AG04450 (cell line): ENCODE measurements at regions of chr22 and their contacts with region 1.

Region 1: GRCh38 chr22:30289134-30289979 is at the start of gene CASTOR1:
- DNase-seq: peak; percentile 95
- H3K4me3 ChIP-seq: peak within 1 kb of the TSS; percentile 84
- H3K27ac ChIP-seq: peak within 1 kb of the TSS; percentile 73
- H3K27me3 ChIP-seq: no peaks in the 10 kb centered on the region
- CTCF ChIP-seq: no peak
- polyA plus RNA-seq, gene CASTOR1: 12.0 and 15.3 TPM in 2 replicates

Region 2: DNA sequence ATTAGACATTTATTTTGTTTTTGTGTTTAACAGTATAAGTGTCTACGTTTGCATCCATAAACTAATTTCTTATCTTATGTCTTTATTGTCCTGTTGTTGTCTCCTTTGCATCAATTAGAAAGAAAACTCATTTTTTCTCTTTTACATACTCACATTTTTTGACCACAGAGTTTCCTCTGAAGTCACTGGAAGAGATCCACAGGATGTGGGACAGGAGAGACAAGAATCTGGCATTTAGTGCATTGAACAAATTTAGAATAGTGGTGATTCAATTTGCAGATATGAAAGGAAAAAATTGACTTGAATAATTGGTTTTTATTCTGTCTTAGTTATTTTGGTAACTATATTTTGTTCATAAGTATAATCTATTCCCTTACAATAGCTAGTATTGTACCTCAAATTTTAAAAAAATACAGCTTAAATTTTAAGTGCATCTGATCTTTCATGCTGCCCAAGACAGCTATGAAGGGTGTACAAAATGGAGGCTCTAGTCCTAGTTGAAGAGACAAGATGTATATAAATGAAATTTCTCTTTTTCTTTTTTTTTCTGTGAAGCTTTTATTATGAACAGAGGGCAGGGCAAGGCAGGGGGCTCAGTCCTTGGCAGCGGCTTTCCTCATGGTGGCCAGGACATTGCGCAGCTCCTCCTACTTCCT is 184.7 kb before region 1 on chr22:
- CTCF ChIA-PET with region 1: interaction called, 34 read pairs
- POLR2A ChIA-PET with region 1: no interaction called
- DNase-seq: no peak
- H3K4me3 ChIP-seq: no peak overlapping the region
- H3K27ac ChIP-seq: no peak overlapping the region
- H3K27me3 ChIP-seq: no peaks in the 10 kb centered on the region
- CTCF ChIP-seq: no peak

Region 3: GRCh38 chr22:30212363-30212995 is 76.9 kb before region 1 on chr22:
- CTCF ChIA-PET with region 1: no interaction called
- POLR2A ChIA-PET with region 1: no interaction called
- DNase-seq: peak; percentile 70
- H3K4me3 ChIP-seq: no peak overlapping the region
- H3K27ac ChIP-seq: peak overlapping the region; percentile 84
- H3K27me3 ChIP-seq: no peaks in the 10 kb centered on the region
- CTCF ChIP-seq: peak; percentile 14; the same call in 1 of the 2 replicates

Region 4: GRCh38 chr22:30235687-30236170 is 53.6 kb before region 1 on chr22:
- CTCF ChIA-PET with region 1: no interaction called
- POLR2A ChIA-PET with region 1: no interaction called
- DNase-seq: peak; percentile 61
- H3K4me3 ChIP-seq: no peak overlapping the region
- H3K27ac ChIP-seq: peak overlapping the region; percentile 90
- H3K27me3 ChIP-seq: no peaks in the 10 kb centered on the region
- CTCF ChIP-seq: no peak

Region 5: DNA sequence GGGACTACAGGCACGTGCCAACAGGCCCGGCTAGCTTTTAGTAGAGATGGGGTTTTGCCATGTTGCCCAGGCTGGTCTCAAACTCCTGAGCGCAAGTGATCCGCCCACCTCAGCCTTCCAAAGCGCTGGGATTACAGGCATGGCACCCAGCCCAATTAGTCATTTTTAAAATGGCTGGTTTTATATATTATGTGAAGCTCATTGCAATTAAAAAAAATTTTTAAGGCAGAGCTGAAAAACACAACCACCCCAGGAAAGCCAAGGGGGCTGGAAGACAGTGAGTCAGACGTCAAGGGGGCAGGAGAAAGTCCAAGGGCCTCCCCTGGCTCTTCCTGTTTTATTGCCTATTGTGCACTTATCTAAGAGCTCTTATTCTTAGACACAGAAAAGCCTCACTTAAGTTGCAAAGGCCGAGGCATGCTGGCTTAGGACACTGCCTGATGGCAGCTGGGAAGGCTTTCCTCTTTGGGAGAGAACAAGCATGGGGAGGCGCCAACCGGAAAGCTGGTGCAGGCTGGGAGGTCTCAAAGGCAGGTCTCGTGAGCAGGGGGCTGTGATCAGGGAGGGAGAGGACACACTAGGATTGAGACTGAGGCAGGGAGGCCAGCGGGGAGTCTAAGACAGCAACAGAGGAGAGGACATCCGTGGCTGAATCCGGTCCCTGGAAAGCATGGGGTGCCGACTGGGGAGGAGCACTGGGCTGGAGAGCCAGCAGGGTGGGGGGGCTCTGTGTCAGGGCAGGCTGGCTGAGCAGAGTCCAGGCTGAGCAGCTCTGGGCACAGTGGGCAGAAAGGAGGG is 11.6 kb before region 1 on chr22:
- CTCF ChIA-PET with region 1: interaction called, 13 read pairs
- POLR2A ChIA-PET with region 1: interaction called, 5 read pairs
- DNase-seq: no peak
- H3K4me3 ChIP-seq: no peak overlapping the region
- H3K27ac ChIP-seq: peak overlapping the region; percentile 65
- H3K27me3 ChIP-seq: no peaks in the 10 kb centered on the region
- CTCF ChIP-seq: no peak

Region 6: DNA sequence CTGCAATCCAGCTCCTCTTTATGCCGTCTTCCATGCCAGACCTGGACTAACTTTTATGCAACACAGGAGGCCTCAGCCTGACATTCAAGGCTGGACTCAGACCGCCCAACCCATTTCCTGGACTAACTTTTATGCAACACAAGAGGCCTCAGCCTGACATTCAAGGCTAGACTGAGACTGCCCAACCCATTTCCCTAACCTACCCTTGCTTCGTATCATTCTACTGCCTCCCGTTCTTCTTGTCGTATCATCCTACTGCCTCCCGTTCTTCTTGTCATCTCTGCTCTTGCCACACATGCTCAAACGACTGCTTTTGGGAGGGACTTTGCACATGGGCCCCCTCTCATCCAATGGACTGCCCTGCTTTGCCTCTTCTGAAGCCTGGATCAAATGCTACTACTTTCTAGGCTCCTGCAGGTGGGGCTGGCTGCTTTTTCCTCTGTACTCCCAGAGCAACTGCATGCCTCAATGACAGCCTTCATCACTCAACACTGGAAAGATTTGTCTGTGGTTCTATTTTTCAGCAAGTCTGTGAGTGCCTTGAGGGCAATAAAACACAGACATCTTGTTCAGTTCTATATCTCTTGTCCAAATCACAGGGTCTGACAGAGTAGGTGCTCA is 29.6 kb after region 1 on chr22:
- CTCF ChIA-PET with region 1: interaction called, 44 read pairs
- POLR2A ChIA-PET with region 1: interaction called, 3 read pairs
- DNase-seq: no peak
- H3K4me3 ChIP-seq: no peak overlapping the region
- H3K27ac ChIP-seq: no peak overlapping the region
- H3K27me3 ChIP-seq: no peaks in the 10 kb centered on the region
- CTCF ChIP-seq: no peak

Region 7: GRCh38 chr22:30356449-30357235 is 67.3 kb after region 1 on chr22 and contains the starts of genes CCDC157 and SF3A1:
- CTCF ChIA-PET with region 1: interaction called, 9 read pairs
- POLR2A ChIA-PET with region 1: interaction called, 19 read pairs
- DNase-seq: peak; percentile 72
- H3K4me3 ChIP-seq: peak within 1 kb of the TSS; percentile 92
- H3K27ac ChIP-seq: peak within 1 kb of the TSS; percentile 75
- H3K27me3 ChIP-seq: no peaks in the 10 kb centered on the region
- CTCF ChIP-seq: no peak
- polyA plus RNA-seq, gene CCDC157: 1.6 and 1.8 TPM in 2 replicates
- polyA plus RNA-seq, gene SF3A1: 53.1 and 82.7 TPM in 2 replicates

Region 8: GRCh38 chr22:30423982-30424963 is 134.9 kb after region 1 on chr22:
- CTCF ChIA-PET with region 1: interaction called, 11 read pairs
- POLR2A ChIA-PET with region 1: no interaction called
- DNase-seq: peak; percentile 99
- H3K4me3 ChIP-seq: peak overlapping the region; percentile 61
- H3K27ac ChIP-seq: peak overlapping the region; percentile 99
- H3K27me3 ChIP-seq: no peaks in the 10 kb centered on the region
- CTCF ChIP-seq: no peak

Region 9: GRCh38 chr22:30717331-30717921 is 428.1 kb after region 1 on chr22:
- CTCF ChIA-PET with region 1: no interaction called
- POLR2A ChIA-PET with region 1: no interaction called
- DNase-seq: peak; percentile 24
- H3K4me3 ChIP-seq: no peak overlapping the region
- H3K27ac ChIP-seq: peak overlapping the region; percentile 48
- H3K27me3 ChIP-seq: no peaks in the 10 kb centered on the region
- CTCF ChIP-seq: no peak